Kidney (tissue), 22 donors: ENCODE measurements at regions of chr6 and their contacts with region 1.

Region 1: GRCh38 chr6:10030942-10031537 is 383.8 kb downstream of the TFAP2A start:
- DNase-seq: peak in 1 of 5 donors; percentile 9
- H3K4me3 ChIP-seq: no peak overlapping the region
- H3K27ac ChIP-seq: no peak overlapping the region
- H3K4me1 ChIP-seq: no peaks in the 10 kb centered on the region
- H3K27me3 ChIP-seq: no peaks in the 10 kb centered on the region
- CTCF ChIP-seq: peak; percentile 26

Region 2: GRCh38 chr6:10411971-10412745 is 381.1 kb after region 1 on chr6:
- intact Hi-C with region 1: loop called (anchors 10 kb)
- DNase-seq: peak; percentile 76 to 90 (median 81)
- H3K4me3 ChIP-seq: peak overlapping the region; percentile 65 to 79 (median 77)
- H3K27ac ChIP-seq: peak overlapping the region; percentile 83
- H3K4me1 ChIP-seq: peaks cover 0 to 17% (median 0%) of the 10 kb centered on the region in 3 donors
- H3K27me3 ChIP-seq: peaks cover 62% of the 10 kb centered on the region
- CTCF ChIP-seq: no peak